CD4-positive, alpha-beta T cell (primary cell): ENCODE measurements at regions of chr16 and their contacts with region 1.

Region 1: GRCh38 chr16:53457670-53458069 is 23.4 kb downstream of the RBL2 start:
- DNase-seq: peak; percentile 49 to 94 (median 66)
- ATAC-seq: peak; percentile 74
- H3K4me3 ChIP-seq: peak overlapping the region; percentile 32
- H3K4me3 Mint-ChIP-seq: peak overlapping the region; percentile 74
- H3K27ac ChIP-seq: peak overlapping the region; percentile 53 to 60
- H3K27ac Mint-ChIP-seq: peak overlapping the region; percentile 94
- H3K4me1 ChIP-seq: peaks cover 67% of the 10 kb centered on the region
- H3K4me1 Mint-ChIP-seq: peaks cover 97% of the 10 kb centered on the region
- H3K27me3 ChIP-seq: no peaks in the 10 kb centered on the region
- H3K27me3 Mint-ChIP-seq: no peaks in the 10 kb centered on the region
- CTCF ChIP-seq: no peak

Region 2: GRCh38 chr16:53372992-53373871 is 84.4 kb before region 1 on chr16:
- CTCF ChIA-PET with region 1: no interaction called
- POLR2A ChIA-PET with region 1: interaction called, 30 read pairs
- intact Hi-C with region 1: loop called in 1 of 2 experiments (anchors 2 kb)
- DNase-seq: peak; percentile 65 to 94 (median 82)
- ATAC-seq: peak; percentile 96
- H3K4me3 ChIP-seq: peak overlapping the region; percentile 72
- H3K4me3 Mint-ChIP-seq: no peak overlapping the region
- H3K27ac ChIP-seq: no peak overlapping the region
- H3K27ac Mint-ChIP-seq: peak overlapping the region; percentile 59
- H3K4me1 ChIP-seq: peaks cover 13% of the 10 kb centered on the region
- H3K4me1 Mint-ChIP-seq: peaks cover 35% of the 10 kb centered on the region
- H3K27me3 ChIP-seq: no peaks in the 10 kb centered on the region
- H3K27me3 Mint-ChIP-seq: no peaks in the 10 kb centered on the region
- CTCF ChIP-seq: no peak

Region 3: DNA sequence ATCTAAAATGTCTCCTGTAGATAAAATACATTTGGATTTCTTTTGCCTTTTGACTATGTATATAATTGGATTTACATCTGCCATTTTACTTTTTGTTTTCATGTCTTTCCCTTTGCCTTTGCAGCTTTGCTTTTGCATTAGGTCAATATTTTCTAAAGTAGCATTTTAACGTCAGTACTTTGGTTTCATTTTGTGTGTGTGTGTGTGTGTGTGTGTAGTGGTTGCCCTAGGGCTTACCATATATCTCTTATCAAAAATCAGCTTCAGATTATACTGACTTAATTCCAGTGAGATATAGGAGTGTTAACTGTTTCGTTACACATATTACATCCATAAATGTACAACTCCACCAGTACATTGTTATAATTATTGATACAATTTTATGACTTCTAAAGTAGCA is 19.2 kb after region 1 on chr16:
- CTCF ChIA-PET with region 1: no interaction called
- POLR2A ChIA-PET with region 1: interaction called, 39 read pairs
- intact Hi-C with region 1: no loop called
- DNase-seq: no peak
- ATAC-seq: no peak
- H3K4me3 ChIP-seq: no peak overlapping the region
- H3K4me3 Mint-ChIP-seq: peak overlapping the region; percentile 21
- H3K27ac ChIP-seq: no peak overlapping the region
- H3K27ac Mint-ChIP-seq: peak overlapping the region; percentile 63
- H3K4me1 ChIP-seq: peaks cover 11% of the 10 kb centered on the region
- H3K4me1 Mint-ChIP-seq: peaks cover 72% of the 10 kb centered on the region
- H3K27me3 ChIP-seq: no peaks in the 10 kb centered on the region
- H3K27me3 Mint-ChIP-seq: no peaks in the 10 kb centered on the region
- CTCF ChIP-seq: no peak

Region 4: GRCh38 chr16:53495325-53495724 is 37.7 kb after region 1 on chr16:
- CTCF ChIA-PET with region 1: interaction called, 4 read pairs
- POLR2A ChIA-PET with region 1: interaction called, 94 read pairs
- intact Hi-C with region 1: loop called in 1 of 2 experiments (anchors 5 kb)
- DNase-seq: peak in 1 of 14 experiments; percentile 25
- ATAC-seq: no peak
- H3K4me3 ChIP-seq: no peak overlapping the region
- H3K4me3 Mint-ChIP-seq: no peak overlapping the region
- H3K27ac ChIP-seq: no peak overlapping the region
- H3K27ac Mint-ChIP-seq: peak overlapping the region; percentile 61
- H3K4me1 ChIP-seq: peaks cover 23% of the 10 kb centered on the region
- H3K4me1 Mint-ChIP-seq: peaks cover 80% of the 10 kb centered on the region
- H3K27me3 ChIP-seq: no peaks in the 10 kb centered on the region
- H3K27me3 Mint-ChIP-seq: no peaks in the 10 kb centered on the region
- CTCF ChIP-seq: no peak

Region 5: DNA sequence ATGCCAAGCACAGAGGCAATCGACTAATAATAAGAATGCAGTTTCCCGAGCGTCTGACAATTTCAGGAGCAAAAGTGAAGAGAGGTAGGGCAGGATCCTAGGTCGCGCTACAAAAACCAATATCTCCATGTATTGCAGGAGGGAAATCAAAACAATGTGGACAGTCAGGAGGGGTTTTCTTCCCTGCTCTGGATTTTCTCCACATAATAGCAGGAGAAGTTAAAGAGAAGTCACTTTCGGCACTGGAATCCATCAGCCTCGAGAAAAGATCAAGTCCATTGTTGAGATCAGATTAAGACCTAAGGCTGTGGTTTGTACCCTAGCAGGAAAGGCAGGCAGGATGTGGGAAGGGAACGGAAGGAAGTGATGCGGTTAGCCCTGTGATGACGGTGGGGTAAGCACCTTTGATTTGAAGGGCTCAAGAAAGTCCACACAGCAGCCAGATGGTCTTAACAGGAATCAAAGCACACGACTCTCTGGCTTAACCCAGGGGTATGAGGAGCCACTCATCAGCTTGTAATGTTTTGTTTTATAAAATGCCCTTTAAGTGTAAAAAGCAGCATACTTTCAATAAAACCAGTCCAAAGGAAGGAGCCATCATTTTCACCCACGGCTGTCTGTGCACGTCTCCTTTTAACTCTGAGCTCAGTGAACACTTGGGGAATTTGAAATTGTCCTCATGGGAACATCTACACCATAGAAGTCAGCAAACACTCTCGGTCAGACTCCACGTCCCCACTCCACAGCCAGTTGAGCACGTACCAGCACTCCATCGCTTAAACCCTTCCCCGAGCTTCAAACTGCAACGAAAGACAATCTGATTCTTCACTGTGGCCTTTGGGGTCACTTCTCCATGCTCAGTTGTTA is 61.1 kb after region 1 on chr16:
- CTCF ChIA-PET with region 1: no interaction called
- POLR2A ChIA-PET with region 1: interaction called, 17 read pairs
- intact Hi-C with region 1: loop called in 1 of 2 experiments (anchors 1 kb)
- DNase-seq: peak; percentile 45 to 94 (median 65)
- ATAC-seq: peak; percentile 82
- H3K4me3 ChIP-seq: peak overlapping the region; percentile 49
- H3K4me3 Mint-ChIP-seq: peak overlapping the region; percentile 73
- H3K27ac ChIP-seq: peak overlapping the region in 1 of 2 donors; percentile 78
- H3K27ac Mint-ChIP-seq: peak overlapping the region; percentile 75
- H3K4me1 ChIP-seq: peaks cover 55% of the 10 kb centered on the region
- H3K4me1 Mint-ChIP-seq: peaks cover 43% of the 10 kb centered on the region
- H3K27me3 ChIP-seq: no peaks in the 10 kb centered on the region
- H3K27me3 Mint-ChIP-seq: no peaks in the 10 kb centered on the region
- CTCF ChIP-seq: no peak